ENCODE measurements at regions of chr10 and their contacts with region 1.

Region 1: DNA sequence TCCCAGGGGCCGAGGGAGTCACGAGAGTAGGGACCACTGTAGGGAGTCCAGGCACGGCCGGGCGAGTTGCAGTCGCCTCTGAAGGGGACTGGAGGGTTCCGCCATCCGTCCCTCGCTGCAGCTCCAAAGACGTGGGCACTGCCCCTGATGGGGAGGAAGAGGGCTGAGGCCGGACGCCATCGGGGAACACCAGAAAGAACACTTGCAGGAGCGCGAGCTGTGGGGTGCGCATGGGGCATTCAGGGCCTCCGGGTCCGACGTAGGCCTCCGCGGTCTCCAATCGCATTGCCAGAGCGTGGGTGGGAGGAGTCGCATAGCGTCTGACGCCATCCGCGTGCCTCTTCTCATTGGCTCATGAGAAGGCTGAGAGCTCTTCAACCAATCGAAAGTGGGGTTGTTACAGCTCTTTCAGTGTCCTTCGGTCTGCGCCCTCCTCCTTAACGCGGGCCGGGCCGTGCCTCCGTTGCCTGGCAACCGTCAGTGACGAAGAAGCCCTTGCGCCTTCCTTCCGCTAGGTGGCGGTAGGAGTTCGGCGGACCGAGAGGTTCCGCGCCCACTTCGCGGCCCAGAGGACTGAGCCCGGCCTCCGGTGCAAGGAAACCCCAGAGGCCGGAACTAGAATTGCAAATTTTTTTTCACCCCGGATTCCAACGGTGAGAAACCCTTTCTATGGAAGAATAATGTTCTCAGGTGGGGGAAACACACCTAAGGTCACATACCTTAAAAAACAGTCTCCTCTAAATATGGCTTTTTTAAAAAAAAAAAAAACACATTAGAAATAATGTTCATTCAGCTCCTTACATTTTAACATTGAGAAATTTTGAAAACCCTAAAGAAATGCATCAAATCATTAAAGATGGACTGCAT is at the start of gene TCTN3:
- DNase-seq: peak; percentile 97
- H3K4me3 Mint-ChIP-seq: peak within 1 kb of the TSS; percentile 96
- H3K27ac Mint-ChIP-seq: peak within 1 kb of the TSS; percentile 83
- H3K4me1 Mint-ChIP-seq: peaks cover 37% of the 10 kb centered on the region
- H3K27me3 Mint-ChIP-seq: no peaks in the 10 kb centered on the region
- total RNA-seq, gene TCTN3: 17.6 to 19.2 TPM

Region 2: GRCh38 chr10:95561182-95562075 is 132.5 kb before region 1 on chr10 and contains the start of gene SORBS1:
- CTCF ChIA-PET with region 1: no interaction called
- intact Hi-C with region 1: loop called (anchors 1 kb)
- DNase-seq: peak; percentile 88
- H3K4me3 Mint-ChIP-seq: peak within 1 kb of the TSS; percentile 92
- H3K27ac Mint-ChIP-seq: no peak within 1 kb of the TSS
- H3K4me1 Mint-ChIP-seq: peaks cover 9% of the 10 kb centered on the region
- H3K27me3 Mint-ChIP-seq: peaks cover 14% of the 10 kb centered on the region
- total RNA-seq, gene SORBS1: 0.77 to 0.93 TPM

Region 3: GRCh38 chr10:95716466-95717224 is 22.7 kb after region 1 on chr10:
- CTCF ChIA-PET with region 1: interaction called, 12 read pairs
- intact Hi-C with region 1: no loop called
- DNase-seq: no peak
- H3K4me3 Mint-ChIP-seq: no peak overlapping the region
- H3K27ac Mint-ChIP-seq: no peak overlapping the region
- H3K4me1 Mint-ChIP-seq: no peaks in the 10 kb centered on the region
- H3K27me3 Mint-ChIP-seq: no peaks in the 10 kb centered on the region

Region 4: GRCh38 chr10:95872158-95872711 is 178.3 kb after region 1 on chr10:
- CTCF ChIA-PET with region 1: interaction called, 14 read pairs
- intact Hi-C with region 1: no loop called
- DNase-seq: no peak
- H3K4me3 Mint-ChIP-seq: no peak overlapping the region
- H3K27ac Mint-ChIP-seq: no peak overlapping the region
- H3K4me1 Mint-ChIP-seq: no peaks in the 10 kb centered on the region
- H3K27me3 Mint-ChIP-seq: no peaks in the 10 kb centered on the region

Region 5: DNA sequence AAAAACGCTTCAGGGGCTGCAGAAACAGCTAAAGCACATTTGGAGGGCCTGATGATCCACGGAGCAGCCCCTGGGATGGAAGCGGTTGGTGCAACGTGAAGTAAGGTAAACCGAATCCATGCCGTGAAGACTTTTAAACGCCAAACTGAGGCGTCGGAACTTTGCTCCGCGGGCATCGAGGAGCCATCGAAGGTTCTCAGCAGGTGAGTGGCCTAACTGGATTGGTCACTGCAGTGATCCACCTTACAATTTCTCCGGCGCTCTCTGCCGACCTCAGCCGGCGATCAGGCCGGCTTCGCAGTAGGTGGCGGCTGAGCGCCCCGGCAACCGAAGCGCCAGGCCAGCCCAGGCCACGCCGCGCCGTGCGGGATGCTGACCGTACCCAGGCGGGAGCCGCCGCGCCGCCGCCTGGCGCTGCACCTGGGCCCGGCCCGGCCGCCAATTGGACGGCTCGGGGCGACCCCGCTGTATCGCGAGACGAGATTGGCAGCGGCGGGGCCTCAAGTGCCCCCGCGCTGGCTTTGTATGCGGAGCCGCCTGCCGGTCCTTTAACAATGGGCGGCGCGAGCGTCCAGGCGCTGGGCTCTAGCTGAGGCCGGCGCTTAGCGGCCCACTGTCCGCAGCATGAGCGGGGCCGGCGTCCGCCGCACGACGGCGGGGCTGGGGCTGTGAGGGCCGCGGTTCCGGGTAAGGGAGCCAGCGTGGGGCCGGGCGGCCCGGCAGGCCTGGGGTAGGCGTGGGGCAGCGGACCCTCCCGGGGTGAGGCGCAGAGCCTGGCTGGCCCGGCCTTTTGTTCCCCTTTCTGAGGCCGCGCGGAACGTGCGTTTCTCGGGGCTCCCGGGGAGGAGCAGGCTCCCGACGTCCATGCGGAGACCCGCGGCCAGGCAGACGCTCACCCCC is 349.4 kb after region 1 on chr10 and contains the start of gene CCNJ:
- CTCF ChIA-PET with region 1: no interaction called
- intact Hi-C with region 1: loop called (anchors 1 kb)
- DNase-seq: peak; percentile 85
- H3K4me3 Mint-ChIP-seq: peak within 1 kb of the TSS; percentile 88
- H3K27ac Mint-ChIP-seq: peak within 1 kb of the TSS; percentile 71
- H3K4me1 Mint-ChIP-seq: peaks cover 35% of the 10 kb centered on the region
- H3K27me3 Mint-ChIP-seq: peaks cover 4% of the 10 kb centered on the region
- total RNA-seq, gene CCNJ: 3.2 to 3.6 TPM

Region 6: GRCh38 chr10:96229568-96230030 is 535.7 kb after region 1 on chr10:
- CTCF ChIA-PET with region 1: interaction called, 3 read pairs
- intact Hi-C with region 1: loop called (anchors 10 kb)
- DNase-seq: peak; percentile 80
- H3K4me3 Mint-ChIP-seq: no peak overlapping the region
- H3K27ac Mint-ChIP-seq: no peak overlapping the region
- H3K4me1 Mint-ChIP-seq: no peaks in the 10 kb centered on the region
- H3K27me3 Mint-ChIP-seq: no peaks in the 10 kb centered on the region

Measured in activated naive CD4-positive, alpha-beta T cell treated with anti-CD3 and anti-CD28 coated beads for 36 hours (primary cell).